ENCODE measurements at regions of chr14 and their contacts with region 1.

Region 1: GRCh38 chr14:28652811-28653221 is 113.8 kb upstream of the FOXG1 start:
- DNase-seq: peak; percentile 91
- H3K4me3 ChIP-seq: peak overlapping the region in 2 of 3 experiments; percentile 19 to 29
- H3K27ac ChIP-seq: peak overlapping the region; percentile 99
- H3K4me1 ChIP-seq: peaks cover 46% of the 10 kb centered on the region
- H3K27me3 ChIP-seq: no peaks in the 10 kb centered on the region
- CTCF ChIP-seq: no peak

Region 2: DNA sequence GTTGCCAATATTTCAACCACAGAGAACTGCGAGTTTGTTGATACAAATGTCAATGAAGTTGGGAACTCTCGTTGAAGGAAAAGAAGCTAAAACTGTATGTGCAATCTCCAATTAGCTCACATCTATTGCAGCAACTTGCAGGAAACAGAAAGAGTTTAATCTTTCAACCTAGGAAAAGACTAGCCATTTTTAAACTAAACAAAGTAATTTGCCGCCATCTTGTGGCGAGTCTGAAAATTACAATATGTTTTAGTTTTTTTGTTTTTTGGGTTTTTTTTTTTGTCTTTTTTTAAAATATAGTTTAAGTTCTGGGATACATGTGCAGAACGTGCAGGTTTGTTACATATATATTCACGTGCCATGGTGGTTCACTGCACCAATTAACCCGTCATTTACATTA is 17.4 kb before region 1 on chr14:
- CTCF ChIA-PET with region 1: interaction called, 10 read pairs
- dilution Hi-C with region 1: no loop called
- in situ Hi-C with region 1: no loop called
- intact Hi-C with region 1: no loop called
- DNase-seq: peak; percentile 27
- H3K4me3 ChIP-seq: no peak overlapping the region
- H3K27ac ChIP-seq: no peak overlapping the region
- H3K4me1 ChIP-seq: no peaks in the 10 kb centered on the region
- H3K27me3 ChIP-seq: no peaks in the 10 kb centered on the region
- CTCF ChIP-seq: peak; percentile 31 to 43

Region 3: GRCh38 chr14:28719130-28719529 is 66.3 kb after region 1 on chr14:
- CTCF ChIA-PET with region 1: no interaction called
- dilution Hi-C with region 1: no loop called
- in situ Hi-C with region 1: no loop called
- intact Hi-C with region 1: no loop called
- DNase-seq: peak; percentile 52
- H3K4me3 ChIP-seq: no peak overlapping the region
- H3K27ac ChIP-seq: no peak overlapping the region
- H3K4me1 ChIP-seq: no peaks in the 10 kb centered on the region
- H3K27me3 ChIP-seq: no peaks in the 10 kb centered on the region
- CTCF ChIP-seq: no peak

Region 4: DNA sequence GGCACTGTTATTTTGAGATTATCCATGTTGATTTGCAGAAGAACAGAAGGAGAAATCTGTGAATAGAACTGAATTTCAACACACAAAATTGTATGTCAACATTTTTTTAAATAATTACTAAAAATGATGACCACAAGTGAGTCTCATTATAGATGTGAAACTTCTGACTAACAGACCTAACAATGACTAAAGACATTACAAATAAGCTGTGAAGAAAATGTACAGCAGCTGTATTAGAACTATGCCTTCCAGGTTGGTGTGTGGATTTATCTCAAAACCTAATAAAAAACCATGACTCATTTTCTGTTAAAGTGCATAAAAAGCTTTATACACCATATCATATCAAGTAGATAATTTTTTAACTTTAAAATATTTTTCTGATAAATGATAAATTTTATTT is 91.3 kb after region 1 on chr14:
- CTCF ChIA-PET with region 1: no interaction called
- dilution Hi-C with region 1: no loop called
- in situ Hi-C with region 1: no loop called
- intact Hi-C with region 1: loop called (anchors 5 kb)
- DNase-seq: peak; percentile 76
- H3K4me3 ChIP-seq: no peak overlapping the region
- H3K27ac ChIP-seq: peak overlapping the region; percentile 43
- H3K4me1 ChIP-seq: peaks cover 19% of the 10 kb centered on the region
- H3K27me3 ChIP-seq: no peaks in the 10 kb centered on the region
- CTCF ChIP-seq: no peak

Region 5: DNA sequence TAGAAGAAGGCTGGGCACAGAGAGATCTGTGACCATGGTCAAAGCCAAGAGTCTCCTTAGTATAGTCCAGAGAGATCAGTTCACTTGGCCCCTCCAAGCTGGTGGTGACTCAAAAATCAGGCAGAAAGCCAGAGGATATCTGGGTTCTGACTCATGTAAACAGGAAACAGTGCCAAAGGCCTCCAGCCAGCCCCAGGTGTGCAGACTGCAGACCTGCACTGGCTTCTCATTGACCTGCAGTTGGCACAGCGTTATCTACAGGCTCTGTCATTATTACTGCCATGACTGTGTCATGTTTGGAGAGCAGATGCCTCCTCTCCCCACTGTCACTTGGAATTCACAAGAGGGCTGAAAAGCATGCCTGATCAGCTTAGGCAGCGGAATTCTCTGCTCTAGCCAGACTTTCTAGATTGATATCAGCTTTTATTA is 1570.6 kb after region 1 on chr14:
- CTCF ChIA-PET with region 1: no interaction called
- dilution Hi-C with region 1: no loop called
- in situ Hi-C with region 1: no loop called
- intact Hi-C with region 1: loop called (anchors 10 kb)
- DNase-seq: peak; percentile 89
- H3K4me3 ChIP-seq: no peak overlapping the region
- H3K27ac ChIP-seq: no peak overlapping the region
- H3K4me1 ChIP-seq: peaks cover 24% of the 10 kb centered on the region
- H3K27me3 ChIP-seq: no peaks in the 10 kb centered on the region
- CTCF ChIP-seq: no peak